Heart right ventricle (tissue), 16 donors: ENCODE measurements at regions of chr14 and their contacts with region 1.

Region 1: GRCh38 chr14:35416108-35416750 is 11.7 kb upstream of the NFKBIA start:
- DNase-seq: no peak
- ATAC-seq: no peak
- H3K4me3 ChIP-seq: no peak overlapping the region
- H3K27ac ChIP-seq: peak overlapping the region in 4 of 10 donors; percentile 23 to 75 (median 32)
- H3K4me1 ChIP-seq: peaks cover 4 to 49% (median 36%) of the 10 kb centered on the region in 9 donors
- H3K27me3 ChIP-seq: no peaks in the 10 kb centered on the region
- CTCF ChIP-seq: no peak

Region 2: GRCh38 chr14:34671716-34672115 is 744.5 kb before region 1 on chr14:
- intact Hi-C with region 1: loop called in 1 of 10 experiments (anchors 5 kb)
- DNase-seq: no peak
- ATAC-seq: no peak
- H3K4me3 ChIP-seq: no peak overlapping the region
- H3K27ac ChIP-seq: no peak overlapping the region
- H3K4me1 ChIP-seq: peaks cover 0 to 13% (median 0%) of the 10 kb centered on the region in 9 donors
- H3K27me3 ChIP-seq: no peaks in the 10 kb centered on the region
- CTCF ChIP-seq: no peak

Region 3: GRCh38 chr14:35121887-35122695 is 294.1 kb before region 1 on chr14 and contains the starts of genes PPP2R3C and PRORP:
- intact Hi-C with region 1: loop called in 1 of 10 experiments (anchors 5 kb)
- DNase-seq: peak; percentile 86 to 93
- ATAC-seq: peak; percentile 93 to 97 (median 96)
- H3K4me3 ChIP-seq: peak within 1 kb of the TSS; percentile 33 to 90 (median 70)
- H3K27ac ChIP-seq: peak within 1 kb of the TSS; percentile 92 to 98 (median 95)
- H3K4me1 ChIP-seq: peaks cover 0 to 73% (median 34%) of the 10 kb centered on the region in 9 donors
- H3K27me3 ChIP-seq: no peaks in the 10 kb centered on the region
- CTCF ChIP-seq: no peak
- total RNA-seq, gene PPP2R3C: 25.8 to 36.3 (median 27.9) TPM
- total RNA-seq, gene PRORP: 17.6 to 25.4 (median 20.9) TPM

Region 4: DNA sequence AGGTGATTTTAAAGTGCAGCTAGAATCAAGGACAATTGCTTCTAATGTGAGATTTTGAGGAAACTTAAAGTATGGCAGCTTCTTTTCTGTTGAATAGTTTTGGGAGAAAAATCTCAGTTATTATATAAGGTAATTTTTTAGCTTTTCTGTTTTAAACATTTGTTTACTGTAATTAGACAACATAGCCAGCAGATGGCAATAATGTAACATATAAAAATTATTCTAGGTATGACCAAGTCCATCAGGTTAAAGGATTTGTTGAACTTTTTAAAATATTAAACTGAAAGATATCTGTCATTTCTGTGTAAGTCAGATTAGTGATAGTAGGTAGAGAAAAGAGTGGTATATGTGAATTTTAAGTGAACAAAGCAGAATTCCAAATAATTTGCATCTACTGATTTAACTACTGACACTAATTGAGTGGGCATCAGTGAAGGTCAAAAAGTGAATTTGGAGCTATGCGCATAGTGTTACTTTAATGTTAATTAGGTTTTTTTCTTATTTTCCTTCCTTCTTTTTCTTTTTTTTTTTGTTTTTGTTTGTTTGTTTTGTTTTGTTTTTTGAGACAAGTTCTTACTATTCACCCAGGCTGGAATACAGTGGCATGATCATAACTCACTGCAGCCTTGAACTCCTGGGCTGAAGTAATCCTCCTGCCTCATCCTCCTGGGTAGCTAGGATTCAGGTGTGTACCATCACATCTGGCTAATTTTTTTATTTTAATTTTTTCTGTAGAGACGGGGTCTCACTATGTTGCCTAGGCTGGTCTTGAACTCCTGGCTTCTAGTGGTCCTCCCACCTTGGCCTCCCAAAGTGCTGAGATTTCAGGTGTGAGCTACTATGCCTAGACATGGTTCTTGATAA is 275.3 kb before region 1 on chr14:
- intact Hi-C with region 1: loop called (anchors 2 to 5 kb)
- DNase-seq: no peak
- ATAC-seq: no peak
- H3K4me3 ChIP-seq: no peak overlapping the region
- H3K27ac ChIP-seq: no peak overlapping the region
- H3K4me1 ChIP-seq: no peaks in the 10 kb centered on the region
- H3K27me3 ChIP-seq: no peaks in the 10 kb centered on the region
- CTCF ChIP-seq: peak in 7 of 9 donors; percentile 35 to 68 (median 59)

Region 5: DNA sequence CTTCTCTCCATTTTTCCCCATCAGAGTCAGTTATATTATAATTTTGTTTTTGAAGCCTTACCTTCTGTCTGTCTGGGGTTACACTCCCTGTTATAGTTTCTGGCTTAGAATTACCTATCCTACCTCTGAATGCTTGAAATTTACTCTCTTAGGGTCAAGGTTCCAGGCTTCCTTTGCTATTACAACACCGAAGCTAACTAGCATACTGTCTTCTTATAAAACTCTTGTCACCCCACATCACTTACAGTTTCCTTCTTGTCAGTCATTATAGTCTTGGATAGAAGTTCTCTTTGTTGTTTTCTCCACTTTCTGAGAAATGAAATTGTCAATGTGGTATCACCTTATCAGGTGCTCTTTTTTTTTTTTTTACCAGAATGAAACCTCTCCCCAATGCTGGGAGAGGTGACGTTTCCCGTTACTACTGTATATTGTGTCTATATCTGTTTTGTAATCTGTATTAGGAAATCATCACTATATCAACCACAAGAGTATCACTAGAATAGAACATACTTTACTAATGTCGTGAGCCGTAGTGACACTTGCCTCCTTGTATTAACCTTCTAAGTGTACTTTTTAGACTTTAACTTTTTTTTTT is 193.3 kb before region 1 on chr14:
- intact Hi-C with region 1: loop called in 5 of 10 experiments (anchors 5 to 10 kb)
- DNase-seq: no peak
- ATAC-seq: no peak
- H3K4me3 ChIP-seq: no peak overlapping the region
- H3K27ac ChIP-seq: no peak overlapping the region
- H3K4me1 ChIP-seq: peaks cover 0 to 22% (median 8%) of the 10 kb centered on the region in 9 donors
- H3K27me3 ChIP-seq: no peaks in the 10 kb centered on the region
- CTCF ChIP-seq: no peak

Region 6: DNA sequence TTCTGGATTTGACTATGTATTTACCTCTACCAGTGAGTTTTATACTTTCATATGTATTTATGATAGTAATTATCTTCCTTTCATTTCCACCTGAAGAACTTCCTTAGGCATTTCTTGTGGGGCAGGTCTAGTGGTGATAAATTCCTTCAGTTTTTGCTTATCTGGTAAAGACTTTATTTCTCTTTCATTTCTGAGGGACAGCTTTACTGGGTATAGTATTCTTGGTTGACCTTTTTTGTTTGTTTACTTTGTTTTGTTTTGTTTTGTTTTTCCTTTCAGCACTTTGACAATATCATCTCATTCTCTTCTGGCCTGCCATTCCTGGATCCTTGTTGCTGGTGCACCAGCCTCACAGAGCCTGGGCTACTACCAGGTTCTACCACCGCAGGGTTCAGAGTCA is 42.2 kb after region 1 on chr14:
- intact Hi-C with region 1: no loop called
- DNase-seq: no peak
- ATAC-seq: no peak
- H3K4me3 ChIP-seq: no peak overlapping the region
- H3K27ac ChIP-seq: no peak overlapping the region
- H3K4me1 ChIP-seq: no peaks in the 10 kb centered on the region
- H3K27me3 ChIP-seq: peaks cover 0 to 8% (median 0%) of the 10 kb centered on the region in 7 donors
- CTCF ChIP-seq: no peak